Heart right ventricle (tissue), 16 donors: ENCODE measurements at regions of chr6 and their contacts with region 1.

Region 1: DNA sequence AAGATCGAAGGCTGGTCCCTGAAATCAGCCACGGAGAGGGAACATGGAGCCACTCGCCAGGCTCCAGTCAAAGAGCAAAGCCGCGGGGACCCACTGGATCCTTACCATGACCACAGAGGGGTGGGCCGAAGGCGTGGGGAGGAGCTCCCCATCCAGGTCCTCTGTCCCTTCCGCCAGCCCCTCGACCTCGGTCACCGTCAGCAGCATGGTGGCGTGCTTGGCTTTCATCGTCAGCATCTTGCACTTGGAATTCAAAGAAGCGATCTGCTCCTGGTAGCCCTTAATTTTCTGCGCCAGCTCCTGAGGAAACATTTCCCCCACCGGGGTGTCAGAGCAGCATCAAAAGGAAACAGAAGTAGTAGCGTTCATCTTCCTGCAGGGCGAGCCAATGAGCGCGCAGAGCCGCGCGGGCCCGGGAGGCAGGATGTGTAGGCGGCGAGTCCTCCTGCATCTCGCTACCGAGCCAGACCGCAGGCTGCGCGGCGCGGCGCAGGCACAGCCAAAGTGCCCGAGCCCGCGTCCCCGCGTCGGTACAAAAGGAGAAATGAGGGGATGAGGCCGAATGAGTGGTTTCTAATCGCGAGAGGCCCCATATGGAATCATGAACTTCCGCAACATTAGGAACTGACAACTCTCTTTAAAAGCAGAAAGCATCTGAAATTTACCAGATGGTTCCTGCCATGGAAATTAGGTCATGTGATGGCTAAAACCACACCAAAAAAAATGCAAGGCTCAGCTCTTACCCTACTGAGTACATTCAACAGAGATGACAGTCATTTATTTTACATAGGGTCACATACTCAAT is 335.2 kb downstream of the SYNE1 start:
- DNase-seq: peak; percentile 88
- ATAC-seq: peak; percentile 95 to 99 (median 97)
- H3K4me3 ChIP-seq: peak overlapping the region; percentile 23 to 74 (median 61)
- H3K27ac ChIP-seq: peak overlapping the region; percentile 62 to 93 (median 82)
- H3K4me1 ChIP-seq: peaks cover 0 to 55% (median 23%) of the 10 kb centered on the region in 9 donors
- H3K27me3 ChIP-seq: no peaks in the 10 kb centered on the region
- CTCF ChIP-seq: peak; percentile 38 to 77 (median 70)

Region 2: GRCh38 chr6:151974061-151974617 is 327.8 kb before region 1 on chr6:
- intact Hi-C with region 1: no loop called
- DNase-seq: no peak
- ATAC-seq: no peak
- H3K4me3 ChIP-seq: no peak overlapping the region
- H3K27ac ChIP-seq: no peak overlapping the region
- H3K4me1 ChIP-seq: no peaks in the 10 kb centered on the region
- H3K27me3 ChIP-seq: no peaks in the 10 kb centered on the region
- CTCF ChIP-seq: no peak

Region 3: DNA sequence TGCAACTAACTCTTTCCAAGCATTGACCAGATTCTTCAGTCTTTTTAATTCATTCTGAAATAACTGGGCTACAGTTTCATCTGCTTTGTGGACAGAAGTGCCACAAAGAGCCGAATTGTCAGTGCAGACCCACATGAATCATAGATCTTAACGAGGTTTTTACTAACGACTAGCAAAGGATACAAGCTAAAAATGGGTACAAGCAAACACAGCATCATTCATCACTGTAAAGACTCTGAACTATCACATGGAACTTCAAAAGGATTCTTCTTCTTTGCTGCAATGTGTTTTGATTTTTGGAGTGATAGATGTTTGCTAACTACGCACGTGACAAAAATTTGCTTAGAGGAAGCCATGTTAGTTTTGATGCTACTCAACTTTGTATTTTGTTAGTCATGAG is 267.3 kb before region 1 on chr6:
- intact Hi-C with region 1: no loop called
- DNase-seq: no peak
- ATAC-seq: no peak
- H3K4me3 ChIP-seq: no peak overlapping the region
- H3K27ac ChIP-seq: no peak overlapping the region
- H3K4me1 ChIP-seq: no peaks in the 10 kb centered on the region
- H3K27me3 ChIP-seq: no peaks in the 10 kb centered on the region
- CTCF ChIP-seq: no peak

Region 4: GRCh38 chr6:152338335-152339125 is 36.6 kb after region 1 on chr6:
- intact Hi-C with region 1: loop called in 3 of 10 experiments (anchors 5 kb)
- DNase-seq: peak; percentile 43 to 60
- ATAC-seq: peak in 7 of 8 donors; percentile 67 to 90 (median 72)
- H3K4me3 ChIP-seq: no peak overlapping the region
- H3K27ac ChIP-seq: no peak overlapping the region
- H3K4me1 ChIP-seq: peaks cover 0 to 14% (median 0%) of the 10 kb centered on the region in 9 donors
- H3K27me3 ChIP-seq: no peaks in the 10 kb centered on the region
- CTCF ChIP-seq: peak; percentile 77 to 95 (median 91)

Region 5: GRCh38 chr6:152343735-152344360 is 41.9 kb after region 1 on chr6:
- intact Hi-C with region 1: loop called in 3 of 10 experiments (anchors 5 kb)
- DNase-seq: peak in 1 of 2 donors; percentile 26
- ATAC-seq: peak in 7 of 8 donors; percentile 20 to 90 (median 75)
- H3K4me3 ChIP-seq: no peak overlapping the region
- H3K27ac ChIP-seq: peak overlapping the region in 4 of 10 donors; percentile 24 to 64 (median 34)
- H3K4me1 ChIP-seq: peaks cover 0 to 14% (median 0%) of the 10 kb centered on the region in 9 donors
- H3K27me3 ChIP-seq: no peaks in the 10 kb centered on the region
- CTCF ChIP-seq: no peak

Region 6: DNA sequence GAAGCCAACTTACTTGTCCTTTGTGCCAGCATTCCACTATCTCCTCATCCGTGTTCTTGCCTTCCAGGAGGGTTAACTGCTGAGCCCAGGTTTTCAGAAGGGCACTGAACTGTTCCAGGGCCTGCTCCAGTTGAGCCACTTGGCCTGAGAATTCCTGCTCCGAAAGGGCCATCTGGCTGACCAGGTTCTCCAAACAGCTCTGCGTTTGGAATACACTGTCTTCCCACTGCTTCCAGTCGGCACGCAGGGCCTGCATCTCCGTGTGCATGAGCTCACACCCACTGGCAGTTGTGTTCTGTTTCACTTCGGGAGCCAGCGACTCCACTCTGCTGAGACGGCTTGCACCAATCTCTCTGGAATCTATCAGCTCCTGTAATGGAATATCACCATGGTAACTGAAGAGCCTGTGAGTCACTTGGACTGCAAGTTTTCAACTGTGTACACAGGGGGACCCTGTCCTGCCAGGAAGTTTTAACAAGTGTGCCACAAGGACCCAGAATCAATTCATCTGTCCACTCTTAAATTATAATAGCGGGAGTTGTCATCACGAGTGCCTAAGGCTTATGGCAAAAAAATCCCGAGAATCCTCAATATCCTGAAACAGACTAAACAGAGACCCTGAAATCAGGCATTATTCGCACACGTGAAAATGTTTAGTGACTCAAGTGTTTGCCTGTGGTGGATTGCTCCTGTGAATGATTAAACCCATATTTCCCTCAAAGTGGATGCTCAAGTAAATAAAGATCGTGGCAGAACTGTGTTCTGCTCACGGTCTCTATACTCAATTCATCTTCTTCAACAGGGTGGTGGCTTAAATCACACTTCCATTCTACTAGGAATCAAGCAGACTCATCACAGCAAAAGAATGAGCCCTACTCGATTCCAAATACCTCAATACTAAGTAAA is 79.3 kb after region 1 on chr6:
- intact Hi-C with region 1: no loop called
- DNase-seq: peak; percentile 70 to 86
- ATAC-seq: peak; percentile 91 to 96 (median 92)
- H3K4me3 ChIP-seq: peak overlapping the region; percentile 22 to 65 (median 57)
- H3K27ac ChIP-seq: peak overlapping the region; percentile 72 to 96 (median 91)
- H3K4me1 ChIP-seq: peaks cover 0 to 33% (median 13%) of the 10 kb centered on the region in 9 donors
- H3K27me3 ChIP-seq: no peaks in the 10 kb centered on the region
- CTCF ChIP-seq: peak in 1 of 9 donors; percentile 9